GM10248 (cell line): ENCODE measurements at regions of chr3 and their contacts with region 1.

Region 1: GRCh38 chr3:44019736-44020135 is 221.9 kb upstream of the TOPAZ1 start:
- DNase-seq: no peak
- CTCF ChIP-seq: no peak

Region 2: GRCh38 chr3:43759297-43759782 is 260.4 kb before region 1 on chr3:
- CTCF ChIA-PET with region 1: no interaction called
- POLR2A ChIA-PET with region 1: no interaction called
- DNase-seq: no peak
- CTCF ChIP-seq: no peak

Region 3: DNA sequence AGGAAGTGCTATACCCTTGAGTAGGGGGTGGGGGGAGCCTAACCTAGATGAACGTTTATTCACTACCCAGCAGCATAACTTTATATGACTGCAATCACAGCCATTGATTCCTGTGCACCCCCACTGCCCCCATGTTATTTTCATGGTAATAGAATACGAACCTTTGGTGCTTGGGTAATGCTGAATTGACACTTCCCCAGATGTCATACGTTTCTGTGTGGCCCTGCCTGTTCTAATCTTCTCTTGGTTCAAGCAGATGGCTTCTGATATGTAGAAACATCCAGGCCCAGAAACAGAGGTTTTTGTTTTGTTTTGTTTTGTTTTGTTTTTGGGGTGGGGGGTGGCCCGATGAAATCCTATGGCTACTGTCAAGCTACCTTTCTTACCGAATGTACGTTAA is 15.9 kb before region 1 on chr3:
- CTCF ChIA-PET with region 1: interaction called, 11 read pairs
- POLR2A ChIA-PET with region 1: no interaction called
- DNase-seq: no peak
- CTCF ChIP-seq: no peak

Region 4: GRCh38 chr3:44098656-44099415 is 79.1 kb after region 1 on chr3:
- CTCF ChIA-PET with region 1: no interaction called
- POLR2A ChIA-PET with region 1: no interaction called
- DNase-seq: no peak
- CTCF ChIP-seq: no peak

Region 5: GRCh38 chr3:44795197-44795596 is 775.5 kb after region 1 on chr3:
- CTCF ChIA-PET with region 1: no interaction called
- POLR2A ChIA-PET with region 1: no interaction called
- DNase-seq: no peak
- CTCF ChIP-seq: no peak